Caco-2 (cell line): ENCODE measurements at regions of chr10 and their contacts with region 1.

Region 1: DNA sequence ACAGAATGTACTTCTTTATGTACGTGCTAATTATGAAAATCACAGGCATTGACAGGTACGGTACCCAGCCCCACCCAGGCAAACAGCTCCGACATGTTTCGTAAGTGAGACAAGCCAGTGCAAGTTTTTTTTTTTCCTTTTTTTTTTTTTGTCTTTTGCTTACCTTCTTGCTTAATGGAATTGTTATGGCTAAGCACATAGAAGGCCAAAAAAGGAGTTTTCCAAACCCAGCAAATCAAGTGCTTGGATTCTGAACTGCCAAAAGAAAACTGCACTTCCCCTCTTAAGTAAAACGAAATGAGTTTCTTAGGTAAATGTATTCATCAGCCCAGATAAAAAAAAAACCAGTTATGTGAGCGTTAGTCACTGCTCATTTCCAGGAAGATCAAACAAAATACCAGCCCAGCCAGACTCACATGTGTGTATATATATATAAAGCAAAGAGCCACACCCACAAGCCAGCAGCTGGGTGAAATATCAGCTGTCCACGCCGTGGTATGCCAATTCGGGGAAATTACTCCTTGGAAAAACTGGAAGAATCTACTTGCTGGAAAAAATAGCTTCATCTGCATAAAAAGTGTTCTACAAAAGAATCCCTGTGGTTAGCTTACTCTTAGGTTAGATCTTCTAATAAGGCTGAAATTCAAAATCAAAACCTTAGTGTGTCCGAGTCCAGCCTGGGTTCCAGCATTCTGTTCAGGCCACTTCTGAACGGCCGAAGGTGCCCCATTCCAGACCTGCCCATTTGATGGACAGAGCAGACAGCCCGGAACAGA is 8.0 kb downstream of the KLF6 start:
- DNase-seq: peak; percentile 80 to 84
- H3K4me3 ChIP-seq: no peak overlapping the region
- H3K4me3 Mint-ChIP-seq: peak overlapping the region; percentile 17
- H3K27ac Mint-ChIP-seq: peak overlapping the region; percentile 48
- H3K4me1 ChIP-seq: peaks cover 69% of the 10 kb centered on the region
- H3K4me1 Mint-ChIP-seq: peaks cover 47% of the 10 kb centered on the region
- H3K27me3 ChIP-seq: no peaks in the 10 kb centered on the region
- H3K27me3 Mint-ChIP-seq: no peaks in the 10 kb centered on the region
- CTCF ChIP-seq: no peak

Region 2: DNA sequence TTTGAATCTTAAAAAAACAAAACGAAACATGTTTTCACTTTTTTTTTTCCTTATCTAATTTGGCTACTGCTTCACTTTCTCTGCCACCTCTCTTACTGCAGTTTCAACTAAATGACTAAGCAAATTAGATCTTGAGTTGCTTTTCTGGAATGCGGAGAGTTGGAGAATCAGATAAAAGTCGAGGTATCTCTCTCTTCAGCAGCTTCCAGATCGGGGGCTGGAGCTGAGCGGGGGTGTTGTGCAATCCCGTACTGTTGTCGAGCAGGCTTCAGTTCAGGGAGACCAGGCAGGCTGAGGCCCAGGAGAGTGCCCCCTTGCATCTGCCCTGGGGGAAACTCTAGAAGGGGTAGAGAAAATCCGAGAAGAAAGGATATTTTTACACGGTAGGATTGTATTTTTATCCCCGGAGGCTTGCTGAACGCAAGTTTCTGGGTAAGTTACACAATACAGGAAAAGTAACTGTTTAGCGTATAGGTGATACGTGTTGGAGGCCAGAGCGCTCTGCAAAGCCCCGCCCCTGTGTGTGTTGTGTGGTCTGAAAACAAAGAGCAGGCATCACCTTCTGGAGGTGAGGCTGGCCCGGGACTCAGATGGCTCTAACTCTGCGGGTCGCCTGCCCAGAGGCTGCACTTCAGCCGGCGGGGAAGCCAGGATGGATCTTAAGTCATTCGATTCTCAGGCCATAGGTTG is 108.6 kb before region 1 on chr10:
- CTCF ChIA-PET with region 1: no interaction called
- POLR2A ChIA-PET with region 1: no interaction called
- intact Hi-C with region 1: loop called (anchors 5 kb)
- DNase-seq: peak; percentile 85 to 91
- H3K4me3 ChIP-seq: peak overlapping the region; percentile 4
- H3K4me3 Mint-ChIP-seq: peak overlapping the region; percentile 75
- H3K27ac Mint-ChIP-seq: peak overlapping the region; percentile 96
- H3K4me1 ChIP-seq: peaks cover 24% of the 10 kb centered on the region
- H3K4me1 Mint-ChIP-seq: peaks cover 14% of the 10 kb centered on the region
- H3K27me3 ChIP-seq: no peaks in the 10 kb centered on the region
- H3K27me3 Mint-ChIP-seq: no peaks in the 10 kb centered on the region
- CTCF ChIP-seq: no peak

Region 3: DNA sequence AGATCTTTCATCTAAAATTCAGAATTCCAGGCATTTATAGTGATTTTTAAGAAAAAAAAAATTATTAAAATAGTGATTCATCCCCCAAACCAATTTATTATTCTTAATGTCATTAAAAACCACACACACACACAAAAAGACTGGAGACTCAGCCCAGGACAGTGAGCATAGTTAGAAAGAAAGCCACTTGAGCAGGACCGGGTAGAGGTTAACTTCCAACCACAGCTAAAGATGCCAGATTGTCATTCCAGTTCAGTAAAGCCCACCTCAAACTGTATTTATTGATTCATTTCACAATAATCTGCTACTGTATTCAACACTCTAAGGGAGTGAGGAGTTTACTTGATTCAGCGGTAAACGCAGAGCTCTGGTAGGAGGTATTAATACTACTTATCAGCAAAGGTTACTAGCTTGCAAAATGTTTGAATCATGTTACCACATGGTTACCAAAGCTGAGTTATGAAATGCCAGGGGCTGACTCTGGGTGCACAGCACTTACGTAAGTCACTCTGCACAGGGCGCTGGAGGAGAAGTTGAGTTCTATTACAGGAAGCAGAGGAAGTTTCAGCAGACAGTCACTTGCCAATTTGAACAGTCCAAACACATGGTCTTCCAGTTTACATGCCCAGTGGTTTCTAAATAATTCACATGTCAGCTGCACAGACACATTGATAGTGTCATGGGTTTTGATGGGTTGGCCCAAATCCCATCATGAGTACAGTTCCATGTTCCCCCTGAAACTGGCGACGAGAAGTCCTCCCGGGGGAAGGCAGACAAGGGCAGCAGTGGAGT is 56.6 kb before region 1 on chr10:
- CTCF ChIA-PET with region 1: no interaction called
- POLR2A ChIA-PET with region 1: no interaction called
- intact Hi-C with region 1: no loop called
- DNase-seq: peak in 1 of 2 experiments; percentile 15
- H3K4me3 ChIP-seq: no peak overlapping the region
- H3K4me3 Mint-ChIP-seq: no peak overlapping the region
- H3K27ac Mint-ChIP-seq: no peak overlapping the region
- H3K4me1 ChIP-seq: no peaks in the 10 kb centered on the region
- H3K4me1 Mint-ChIP-seq: peaks cover under 1% of the 10 kb centered on the region
- H3K27me3 ChIP-seq: no peaks in the 10 kb centered on the region
- H3K27me3 Mint-ChIP-seq: no peaks in the 10 kb centered on the region
- CTCF ChIP-seq: no peak

Region 4: DNA sequence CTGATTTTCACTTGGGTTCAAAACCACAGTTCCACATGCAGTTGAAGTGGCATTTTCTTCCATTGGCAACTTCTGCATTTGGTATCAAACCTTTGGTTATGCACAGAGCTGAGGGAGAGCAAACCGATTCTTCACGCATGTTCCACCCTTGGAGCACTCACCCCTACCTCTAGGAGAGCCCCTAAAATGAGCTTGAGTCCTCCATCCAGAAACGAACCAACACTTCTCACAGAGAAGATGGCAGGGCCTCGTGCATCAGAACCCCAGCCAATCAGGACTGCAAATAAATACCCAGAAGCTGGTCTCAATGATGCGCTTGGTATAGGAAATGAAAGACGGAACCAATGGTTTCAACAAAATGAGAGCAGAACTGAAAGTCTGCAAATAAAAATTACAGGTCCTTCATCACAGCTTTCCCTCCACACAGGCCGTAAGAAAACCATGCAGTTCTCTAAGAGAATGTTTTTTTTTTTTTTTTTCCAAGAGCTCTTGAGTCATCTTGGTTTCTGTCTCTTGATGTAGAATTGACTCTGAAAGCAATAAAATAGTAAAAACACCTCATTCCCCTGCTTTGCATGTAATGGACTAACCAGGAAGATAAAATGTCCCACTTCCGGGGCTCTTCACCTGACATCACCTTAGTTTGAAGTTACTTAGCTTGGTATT is 15.8 kb before region 1 on chr10:
- CTCF ChIA-PET with region 1: interaction called, 6 read pairs
- POLR2A ChIA-PET with region 1: interaction called, 18 read pairs
- intact Hi-C with region 1: loop called (anchors 1 kb)
- DNase-seq: no peak
- H3K4me3 ChIP-seq: no peak overlapping the region
- H3K4me3 Mint-ChIP-seq: peak overlapping the region; percentile 86
- H3K27ac Mint-ChIP-seq: peak overlapping the region; percentile 78
- H3K4me1 ChIP-seq: peaks cover 94% of the 10 kb centered on the region
- H3K4me1 Mint-ChIP-seq: peaks cover 80% of the 10 kb centered on the region
- H3K27me3 ChIP-seq: no peaks in the 10 kb centered on the region
- H3K27me3 Mint-ChIP-seq: no peaks in the 10 kb centered on the region
- CTCF ChIP-seq: no peak

Region 5: DNA sequence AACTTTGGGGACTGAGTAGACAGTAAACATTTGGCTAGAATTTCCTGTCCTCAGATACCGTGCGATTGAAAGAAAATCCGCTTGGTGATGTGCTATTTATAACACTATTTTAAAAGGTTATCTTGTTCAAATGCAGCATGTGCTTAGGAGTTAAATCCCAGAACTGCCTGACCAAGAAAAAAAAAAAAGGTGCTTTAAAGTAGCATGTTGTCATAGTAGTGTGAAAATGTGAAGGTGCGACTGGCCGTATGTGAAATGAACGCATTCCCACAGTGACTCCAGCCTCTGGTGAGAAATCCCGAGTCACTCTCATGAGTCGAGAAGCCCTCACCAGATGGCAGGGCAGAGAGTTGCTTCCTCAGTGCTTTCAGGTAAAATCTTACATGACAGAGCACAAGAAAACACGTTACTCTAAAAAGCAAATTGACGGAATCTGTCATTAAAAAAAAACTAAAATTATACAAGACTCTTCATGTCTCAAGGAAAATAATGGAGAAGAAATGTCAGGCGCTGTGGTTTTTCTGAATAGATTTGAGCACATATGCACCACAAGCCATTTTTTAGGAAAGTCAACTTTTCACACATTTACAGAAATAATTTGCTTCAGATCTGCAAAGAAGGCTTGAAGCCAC is 26.4 kb after region 1 on chr10:
- CTCF ChIA-PET with region 1: no interaction called
- POLR2A ChIA-PET with region 1: no interaction called
- intact Hi-C with region 1: no loop called
- DNase-seq: peak in 1 of 2 experiments; percentile 51
- H3K4me3 ChIP-seq: no peak overlapping the region
- H3K4me3 Mint-ChIP-seq: no peak overlapping the region
- H3K27ac Mint-ChIP-seq: peak overlapping the region; percentile 29
- H3K4me1 ChIP-seq: peaks cover 61% of the 10 kb centered on the region
- H3K4me1 Mint-ChIP-seq: peaks cover 19% of the 10 kb centered on the region
- H3K27me3 ChIP-seq: no peaks in the 10 kb centered on the region
- H3K27me3 Mint-ChIP-seq: no peaks in the 10 kb centered on the region
- CTCF ChIP-seq: no peak